GM10248 (cell line): ENCODE measurements at regions of chrX and their contacts with region 1.

Region 1: GRCh38 chrX:18871161-18871890 is 112.6 kb downstream of the PHKA2 start:
- DNase-seq: no peak
- CTCF ChIP-seq: no peak

Region 2: DNA sequence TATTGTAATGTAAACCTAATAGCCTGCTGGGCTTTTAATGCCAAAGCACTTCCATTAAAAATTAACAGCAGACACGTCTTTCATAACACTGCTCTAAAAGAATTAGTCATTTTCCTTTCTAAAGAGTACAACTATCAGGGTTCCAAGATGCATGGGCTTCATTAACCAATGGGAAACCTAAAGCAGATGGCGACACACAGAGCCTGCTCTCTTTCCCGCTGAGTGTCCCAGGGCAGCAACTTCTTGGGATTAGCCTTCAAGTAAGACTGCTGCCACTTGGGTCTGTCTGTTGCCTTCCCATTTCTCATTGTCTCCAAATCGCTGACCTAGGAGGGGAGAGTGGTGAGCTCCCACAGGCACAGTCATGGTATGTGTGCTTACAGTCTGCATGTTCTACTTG is 126.6 kb after region 1 on chrX:
- CTCF ChIA-PET with region 1: no interaction called
- POLR2A ChIA-PET with region 1: interaction called, 12 read pairs
- DNase-seq: no peak
- CTCF ChIP-seq: no peak